Breast epithelium (tissue), 4 donors: ENCODE measurements at regions of chr12 and their contacts with region 1.

Region 1: DNA sequence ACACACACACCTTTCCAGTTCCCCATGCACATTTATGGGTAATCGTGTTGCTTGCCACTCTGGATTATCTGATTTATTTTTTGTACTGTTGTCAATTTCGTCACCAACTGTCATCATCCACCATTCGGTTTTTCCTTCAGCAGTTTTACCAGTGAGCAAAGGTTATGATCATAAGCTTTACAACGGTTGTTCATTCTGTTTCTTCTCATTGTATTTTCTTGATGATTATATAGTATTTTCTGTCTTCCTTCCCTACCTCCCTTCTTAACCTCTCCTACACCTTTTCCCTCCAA is 680 bp downstream of the NECAP1 start:
- DNase-seq: no peak
- H3K4me3 ChIP-seq: peak overlapping the region; percentile 68 to 96 (median 92)
- H3K27ac ChIP-seq: peak overlapping the region; percentile 86 to 98
- H3K4me1 ChIP-seq: peaks cover 2 to 4% of the 10 kb centered on the region in 2 donors
- H3K27me3 ChIP-seq: no peaks in the 10 kb centered on the region
- CTCF ChIP-seq: no peak
- POLR2A ChIP-seq: no peak

Region 2: DNA sequence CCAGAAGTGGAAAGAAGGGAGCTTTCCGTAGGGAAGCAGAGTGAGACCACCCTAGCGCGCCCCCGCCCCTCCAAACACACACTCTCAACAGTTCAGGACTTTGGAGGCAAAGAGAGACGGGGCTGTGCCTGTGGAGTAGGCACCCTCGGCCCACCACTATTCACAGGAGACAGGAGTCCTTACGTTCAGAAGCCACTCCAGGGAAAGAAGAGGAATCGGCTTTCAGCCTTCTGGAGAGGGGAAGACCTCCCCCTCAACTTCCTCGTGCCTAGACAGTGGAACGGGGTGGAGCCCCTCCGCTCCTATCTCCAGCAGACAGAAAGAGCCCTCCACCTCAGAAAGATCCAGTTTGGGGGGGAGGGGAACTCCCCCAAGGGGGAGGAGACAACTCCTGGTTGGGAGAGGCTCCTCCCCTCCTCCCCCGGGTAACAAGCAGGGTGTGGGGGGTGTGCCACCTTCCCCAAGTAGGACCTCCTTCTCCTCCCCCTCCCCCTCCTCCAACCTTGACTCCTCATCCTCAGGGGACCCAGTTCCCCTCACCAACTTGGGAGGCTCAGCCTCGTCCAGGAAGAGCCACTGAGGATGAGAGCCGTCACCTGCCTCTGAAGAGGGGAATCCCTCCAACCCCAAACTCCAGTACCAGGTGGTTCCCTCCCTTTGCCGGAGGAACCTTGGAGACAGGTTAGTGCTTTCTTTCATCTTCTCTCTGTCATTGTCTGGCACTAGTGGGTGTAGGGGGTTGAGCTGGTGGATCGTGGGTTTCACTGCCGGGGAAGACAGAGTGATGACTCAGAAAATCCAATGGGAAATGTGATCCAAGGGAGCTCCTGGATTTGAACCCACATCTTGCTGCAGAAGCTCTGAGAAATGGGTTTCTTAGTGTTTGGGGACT is 49.4 kb before region 1 on chr12:
- intact Hi-C with region 1: loop called (anchors 2 kb)
- DNase-seq: peak in 1 of 2 donors; percentile 49
- H3K4me3 ChIP-seq: peak overlapping the region; percentile 78 to 95 (median 86)
- H3K27ac ChIP-seq: peak overlapping the region; percentile 95 to 96
- H3K4me1 ChIP-seq: peaks cover 2 to 41% of the 10 kb centered on the region in 2 donors
- H3K27me3 ChIP-seq: no peaks in the 10 kb centered on the region
- CTCF ChIP-seq: no peak
- POLR2A ChIP-seq: no peak

Region 3: GRCh38 chr12:8156845-8157244 is 74.1 kb after region 1 on chr12 and contains the start of gene ZNF705A:
- intact Hi-C with region 1: no loop called
- DNase-seq: no peak
- H3K4me3 ChIP-seq: no peak within 1 kb of the TSS
- H3K27ac ChIP-seq: no peak within 1 kb of the TSS
- H3K4me1 ChIP-seq: no peaks in the 10 kb centered on the region
- H3K27me3 ChIP-seq: no peaks in the 10 kb centered on the region
- CTCF ChIP-seq: no peak
- POLR2A ChIP-seq: no peak
- total RNA-seq, gene ZNF705A: not detected

Region 4: GRCh38 chr12:8905546-8905945 is 822.8 kb after region 1 on chr12:
- intact Hi-C with region 1: no loop called
- DNase-seq: no peak
- H3K4me3 ChIP-seq: no peak overlapping the region
- H3K27ac ChIP-seq: no peak overlapping the region
- H3K4me1 ChIP-seq: no peaks in the 10 kb centered on the region
- H3K27me3 ChIP-seq: no peaks in the 10 kb centered on the region
- CTCF ChIP-seq: no peak
- POLR2A ChIP-seq: no peak